IMR-90 (cell line): ENCODE measurements at regions of chr6 and their contacts with region 1.

Region 1: DNA sequence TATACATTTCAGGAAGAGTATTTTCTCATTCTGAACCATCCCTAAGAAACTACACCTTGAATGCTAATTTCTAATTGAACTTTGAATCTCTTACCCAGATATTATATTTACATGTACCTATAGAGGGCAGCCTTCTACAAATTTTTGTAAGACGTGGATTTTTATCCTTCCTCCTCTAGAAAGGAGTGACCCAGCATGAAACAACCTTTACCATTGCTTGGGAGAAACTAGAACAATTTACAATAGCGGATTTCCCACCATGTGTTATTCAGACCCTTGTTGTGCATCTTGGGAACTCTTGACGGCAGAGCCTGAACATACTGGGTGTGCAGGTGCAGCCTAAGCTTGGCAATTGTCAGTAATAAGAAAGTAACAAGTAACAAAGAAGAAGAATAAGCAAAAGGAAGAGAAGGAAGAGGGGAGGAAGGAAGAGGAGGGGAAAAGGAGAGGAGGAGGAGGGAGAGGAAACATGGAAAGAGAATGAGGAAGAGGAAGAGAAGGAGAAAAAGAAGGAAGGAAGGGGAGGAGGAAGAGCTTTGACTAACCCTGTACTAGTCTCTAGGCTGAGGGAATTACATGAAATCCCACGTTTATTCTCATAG is 10.8 kb upstream of the TAAR1 start:
- DNase-seq: peak; percentile 54
- ATAC-seq: peak; percentile 87
- H3K4me3 ChIP-seq: no peak overlapping the region
- H3K27ac ChIP-seq: no peak overlapping the region; the same call in 1 of the 2 replicates
- H3K4me1 ChIP-seq: peaks cover 2% of the 10 kb centered on the region
- H3K27me3 ChIP-seq: peaks cover 3% of the 10 kb centered on the region; the same call in 1 of the 2 replicates
- CTCF ChIP-seq: peak; percentile 68
- POLR2A ChIP-seq: no peak
- RAD21 ChIP-seq: peak; percentile 70

Region 2: DNA sequence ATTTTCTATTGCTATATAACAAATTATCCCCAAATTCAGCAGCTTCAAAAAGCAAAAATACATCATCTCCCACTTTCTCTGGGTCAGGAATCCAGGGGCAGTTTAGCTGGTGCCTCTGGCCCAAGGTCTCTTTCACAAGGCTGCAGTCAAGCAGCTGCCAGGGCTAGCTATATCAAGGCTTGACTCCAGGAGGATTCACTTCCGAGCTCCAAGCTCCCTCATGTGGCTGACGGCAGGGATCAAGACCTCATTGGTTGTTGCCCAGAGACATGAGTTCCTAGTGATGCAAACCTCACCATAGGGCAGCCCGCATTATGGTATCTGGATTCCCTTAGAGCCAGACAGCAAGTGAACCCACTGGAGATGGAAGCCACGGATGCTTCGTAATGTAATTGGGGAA is 45.4 kb after region 1 on chr6:
- CTCF ChIA-PET with region 1: interaction called, 10 read pairs
- POLR2A ChIA-PET with region 1: no interaction called
- dilution Hi-C with region 1: no loop called
- in situ Hi-C with region 1: no loop called
- intact Hi-C with region 1: no loop called
- DNase-seq: peak; percentile 76
- ATAC-seq: peak; percentile 88
- H3K4me3 ChIP-seq: no peak overlapping the region
- H3K27ac ChIP-seq: no peak overlapping the region
- H3K4me1 ChIP-seq: 0 out of 2 replicates have a peak, but pooled peaks cover 3% of the 10 kb centered on the region
- H3K27me3 ChIP-seq: no peaks in the 10 kb centered on the region
- CTCF ChIP-seq: peak; percentile 50
- POLR2A ChIP-seq: no peak
- RAD21 ChIP-seq: peak; percentile 57

Region 3: DNA sequence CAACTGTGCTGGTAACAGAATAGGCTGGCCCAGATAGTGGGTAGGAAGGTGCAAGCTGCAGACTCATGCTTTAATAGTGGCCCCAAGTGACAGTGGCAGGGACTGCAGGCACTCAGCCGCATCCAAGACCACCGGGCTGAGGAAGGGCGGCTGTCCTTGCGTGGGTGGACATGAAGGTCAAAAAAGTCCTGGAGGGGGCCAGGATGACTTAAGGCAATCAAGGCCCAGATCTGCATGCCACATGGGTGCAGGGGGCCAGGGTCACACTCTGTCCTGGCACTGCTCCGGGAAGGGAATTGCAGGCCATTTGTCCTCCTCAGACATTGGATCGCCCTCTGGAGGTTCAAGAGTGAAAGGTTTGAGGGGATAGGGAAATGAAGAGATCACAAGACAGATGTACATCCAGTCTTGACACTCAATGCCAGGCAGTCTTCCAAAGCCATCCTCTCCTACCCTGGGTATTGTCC is 98.3 kb after region 1 on chr6:
- CTCF ChIA-PET with region 1: interaction called, 6 read pairs
- POLR2A ChIA-PET with region 1: interaction called, 9 read pairs
- dilution Hi-C with region 1: no loop called
- in situ Hi-C with region 1: loop called (anchors 25 kb)
- intact Hi-C with region 1: loop called (anchors 1 kb)
- DNase-seq: no peak
- ATAC-seq: peak; percentile 61
- H3K4me3 ChIP-seq: no peak overlapping the region
- H3K27ac ChIP-seq: no peak overlapping the region
- H3K4me1 ChIP-seq: peaks cover 2% of the 10 kb centered on the region; the same call in 1 of the 2 replicates
- H3K27me3 ChIP-seq: no peaks in the 10 kb centered on the region
- CTCF ChIP-seq: peak; percentile 21; the same call in 1 of the 2 replicates
- POLR2A ChIP-seq: no peak
- RAD21 ChIP-seq: no peak

Region 4: DNA sequence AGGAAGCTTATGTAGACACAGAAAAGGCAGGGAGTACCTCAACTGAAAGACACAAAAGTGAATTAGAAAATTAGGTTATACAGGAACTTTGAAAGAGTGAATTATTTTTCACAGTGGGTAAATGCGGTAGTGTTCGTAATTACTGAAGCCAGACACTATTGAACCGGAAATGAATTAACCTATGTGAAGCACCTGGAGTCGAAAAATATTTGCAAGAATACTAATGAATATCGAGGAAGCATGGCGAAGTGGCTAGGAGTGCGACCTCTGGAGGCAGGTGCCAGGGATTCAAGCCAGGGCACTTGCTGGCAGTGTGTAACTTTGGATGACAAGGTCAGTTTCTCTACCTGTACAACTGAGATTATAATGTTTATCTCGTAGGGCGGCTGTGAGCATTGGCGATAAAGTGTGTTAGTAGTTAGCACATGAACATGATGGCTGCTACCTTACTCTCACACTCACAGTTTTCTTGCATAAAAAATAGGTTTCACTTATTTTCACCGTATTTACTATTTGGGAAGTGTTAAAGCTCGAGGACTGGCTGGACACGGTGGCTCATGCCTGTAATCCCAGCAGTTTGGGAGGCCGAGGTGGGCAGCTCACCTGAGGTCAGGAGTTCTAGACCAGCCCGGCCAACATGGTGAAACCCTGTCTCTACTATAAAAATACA is 129.2 kb after region 1 on chr6:
- CTCF ChIA-PET with region 1: no interaction called
- POLR2A ChIA-PET with region 1: interaction called, 3 read pairs
- dilution Hi-C with region 1: no loop called
- in situ Hi-C with region 1: no loop called
- intact Hi-C with region 1: loop called (anchors 1 kb)
- DNase-seq: peak; percentile 61
- ATAC-seq: peak; percentile 71
- H3K4me3 ChIP-seq: peak overlapping the region; percentile 95
- H3K27ac ChIP-seq: no peak overlapping the region
- H3K4me1 ChIP-seq: no peaks in the 10 kb centered on the region
- H3K27me3 ChIP-seq: peaks cover 4% of the 10 kb centered on the region
- CTCF ChIP-seq: peak; percentile 75
- POLR2A ChIP-seq: no peak
- RAD21 ChIP-seq: peak; percentile 54

Region 5: DNA sequence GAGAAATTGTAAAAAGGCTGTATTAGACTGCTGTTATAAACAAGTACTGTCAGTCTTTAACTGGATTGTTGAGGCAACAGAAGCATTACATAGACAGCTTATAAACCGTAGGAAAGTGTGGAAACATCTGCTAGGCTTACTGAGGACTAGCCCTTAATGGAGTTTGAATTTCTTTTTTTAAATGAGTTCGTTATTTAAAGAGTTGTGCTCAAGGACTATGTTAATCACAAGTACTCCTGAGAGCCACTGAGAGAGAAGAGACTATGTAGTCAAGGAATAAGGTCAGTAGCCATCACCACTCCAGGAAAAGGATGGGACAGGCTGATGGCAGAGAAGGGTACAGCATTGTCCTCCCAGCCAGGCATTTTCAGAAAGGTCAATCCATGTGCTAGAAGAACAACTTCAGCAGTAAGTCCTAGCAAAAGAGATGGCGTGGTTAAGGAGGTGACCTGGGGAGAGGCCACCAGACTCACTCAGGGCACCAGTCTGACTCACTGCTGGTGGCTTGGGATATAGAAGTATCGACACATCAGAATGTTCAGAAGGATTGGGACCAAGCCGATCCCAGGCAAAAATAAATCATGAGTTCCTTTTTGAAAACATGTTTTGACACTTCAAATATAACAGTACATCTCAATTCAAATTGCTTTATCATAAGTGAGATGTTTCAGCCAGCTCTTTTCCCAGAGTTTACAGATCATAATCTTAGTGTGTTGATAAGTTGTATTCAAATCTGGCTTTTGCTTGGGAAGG is 151.0 kb after region 1 on chr6:
- CTCF ChIA-PET with region 1: no interaction called
- POLR2A ChIA-PET with region 1: interaction called, 14 read pairs
- dilution Hi-C with region 1: no loop called
- in situ Hi-C with region 1: no loop called
- intact Hi-C with region 1: no loop called
- DNase-seq: peak; percentile 52
- ATAC-seq: peak; percentile 41
- H3K4me3 ChIP-seq: no peak overlapping the region
- H3K27ac ChIP-seq: peak overlapping the region; percentile 42; the same call in 1 of the 2 replicates
- H3K4me1 ChIP-seq: peaks cover 4% of the 10 kb centered on the region
- H3K27me3 ChIP-seq: no peaks in the 10 kb centered on the region
- CTCF ChIP-seq: no peak
- POLR2A ChIP-seq: peak; percentile 45
- RAD21 ChIP-seq: no peak